ENCODE measurements at regions of chr2 and their contacts with region 1.

Region 1: GRCh38 chr2:99559075-99559662 is 69.4 kb upstream of the REV1 start:
- DNase-seq: peak; percentile 90
- ATAC-seq: peak; percentile 100
- H3K4me3 ChIP-seq: no peak overlapping the region
- H3K27ac ChIP-seq: no peak overlapping the region
- H3K4me1 ChIP-seq: no peaks in the 10 kb centered on the region
- H3K27me3 ChIP-seq: no peaks in the 10 kb centered on the region
- CTCF ChIP-seq: peak; percentile 97

Region 2: GRCh38 chr2:99615247-99615771 is 56.1 kb after region 1 on chr2:
- CTCF ChIA-PET with region 1: interaction called, 4 read pairs
- POLR2A ChIA-PET with region 1: no interaction called
- intact Hi-C with region 1: loop called (anchors 2 kb)
- DNase-seq: peak; percentile 16
- ATAC-seq: peak; percentile 58; the same call in 1 of the 2 replicates
- H3K4me3 ChIP-seq: no peak overlapping the region
- H3K27ac ChIP-seq: no peak overlapping the region
- H3K4me1 ChIP-seq: no peaks in the 10 kb centered on the region
- H3K27me3 ChIP-seq: no peaks in the 10 kb centered on the region
- CTCF ChIP-seq: peak; percentile 48

Region 3: GRCh38 chr2:99692785-99693184 is 133.6 kb after region 1 on chr2:
- CTCF ChIA-PET with region 1: interaction called, 11 read pairs
- POLR2A ChIA-PET with region 1: no interaction called
- intact Hi-C with region 1: loop called (anchors 1 kb)
- DNase-seq: peak; percentile 44
- ATAC-seq: peak; percentile 62
- H3K4me3 ChIP-seq: no peak overlapping the region
- H3K27ac ChIP-seq: no peak overlapping the region
- H3K4me1 ChIP-seq: peaks cover under 1% of the 10 kb centered on the region; the same call in 1 of the 2 replicates
- H3K27me3 ChIP-seq: no peaks in the 10 kb centered on the region
- CTCF ChIP-seq: peak; percentile 59

Region 4: DNA sequence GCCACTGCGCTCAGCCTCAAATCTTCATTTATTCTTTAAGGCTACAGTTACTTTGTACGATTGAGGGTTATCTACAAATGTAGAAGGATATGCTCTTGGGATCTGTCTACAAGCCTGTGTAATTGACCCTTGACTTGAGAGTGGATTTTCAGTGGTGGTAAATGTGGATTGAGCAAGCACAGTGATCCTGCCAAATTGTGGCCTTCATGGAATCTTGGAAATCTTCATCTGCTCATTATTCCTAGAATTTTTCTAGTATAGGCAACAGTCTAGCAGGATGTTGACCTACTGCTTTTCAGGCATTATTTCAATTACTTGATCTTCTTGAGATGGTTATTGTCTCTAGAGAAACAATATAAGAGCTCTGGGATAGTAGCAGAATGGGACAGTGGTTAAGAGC is 156.8 kb after region 1 on chr2:
- CTCF ChIA-PET with region 1: no interaction called
- POLR2A ChIA-PET with region 1: no interaction called
- intact Hi-C with region 1: loop called (anchors 5 kb)
- DNase-seq: no peak
- ATAC-seq: no peak
- H3K4me3 ChIP-seq: no peak overlapping the region
- H3K27ac ChIP-seq: no peak overlapping the region
- H3K4me1 ChIP-seq: no peaks in the 10 kb centered on the region
- H3K27me3 ChIP-seq: no peaks in the 10 kb centered on the region
- CTCF ChIP-seq: no peak

Region 5: GRCh38 chr2:100262555-100263320 is 703.6 kb after region 1 on chr2:
- CTCF ChIA-PET with region 1: interaction called, 5 read pairs
- POLR2A ChIA-PET with region 1: no interaction called
- intact Hi-C with region 1: loop called (anchors 1 kb)
- DNase-seq: peak; percentile 80
- ATAC-seq: peak; percentile 81
- H3K4me3 ChIP-seq: no peak overlapping the region
- H3K27ac ChIP-seq: no peak overlapping the region
- H3K4me1 ChIP-seq: no peaks in the 10 kb centered on the region
- H3K27me3 ChIP-seq: no peaks in the 10 kb centered on the region
- CTCF ChIP-seq: peak; percentile 94

Measured in PC-3 (cell line).